PC-3 (cell line): ENCODE measurements at regions of chr11 and their contacts with region 1.

Region 1: GRCh38 chr11:19853016-19853415 is 140.4 kb downstream of the NAV2 start:
- DNase-seq: peak; percentile 44
- ATAC-seq: peak; percentile 74
- H3K4me3 ChIP-seq: no peak overlapping the region
- H3K27ac ChIP-seq: no peak overlapping the region
- H3K4me1 ChIP-seq: peaks cover 25% of the 10 kb centered on the region
- H3K27me3 ChIP-seq: no peaks in the 10 kb centered on the region
- CTCF ChIP-seq: no peak

Region 2: GRCh38 chr11:19800162-19800561 is 52.9 kb before region 1 on chr11:
- CTCF ChIA-PET with region 1: no interaction called
- POLR2A ChIA-PET with region 1: no interaction called
- intact Hi-C with region 1: no loop called
- DNase-seq: no peak
- ATAC-seq: no peak
- H3K4me3 ChIP-seq: no peak overlapping the region
- H3K27ac ChIP-seq: peak overlapping the region; percentile 70
- H3K4me1 ChIP-seq: peaks cover 46% of the 10 kb centered on the region
- H3K27me3 ChIP-seq: no peaks in the 10 kb centered on the region
- CTCF ChIP-seq: peak; percentile 48

Region 3: DNA sequence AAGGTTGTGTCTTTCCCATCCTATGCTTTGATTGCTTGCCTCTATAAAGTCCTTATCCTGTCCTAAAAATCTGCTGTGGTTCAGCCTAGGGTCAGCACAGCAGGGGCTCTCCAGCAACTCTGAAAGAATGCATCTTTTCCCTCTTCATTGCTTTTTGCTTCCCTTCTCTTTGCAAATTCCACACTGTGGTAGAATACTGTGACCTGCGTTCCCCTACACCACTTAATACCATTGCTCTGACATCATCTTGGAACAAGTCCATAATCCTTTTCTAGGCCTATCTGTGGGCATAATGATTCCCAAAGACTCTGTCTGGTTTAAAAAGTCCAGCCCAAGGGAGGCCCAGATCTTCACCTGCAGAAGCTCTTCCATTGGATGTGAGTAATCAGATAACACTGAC is 37.3 kb after region 1 on chr11:
- CTCF ChIA-PET with region 1: no interaction called
- POLR2A ChIA-PET with region 1: no interaction called
- intact Hi-C with region 1: loop called (anchors 5 kb)
- DNase-seq: peak; percentile 71
- ATAC-seq: peak; percentile 60
- H3K4me3 ChIP-seq: no peak overlapping the region
- H3K27ac ChIP-seq: no peak overlapping the region
- H3K4me1 ChIP-seq: peaks cover 22% of the 10 kb centered on the region
- H3K27me3 ChIP-seq: no peaks in the 10 kb centered on the region
- CTCF ChIP-seq: no peak